Left colon (tissue), 2 donors: ENCODE measurements at regions of chr4 and their contacts with region 1.

Region 1: DNA sequence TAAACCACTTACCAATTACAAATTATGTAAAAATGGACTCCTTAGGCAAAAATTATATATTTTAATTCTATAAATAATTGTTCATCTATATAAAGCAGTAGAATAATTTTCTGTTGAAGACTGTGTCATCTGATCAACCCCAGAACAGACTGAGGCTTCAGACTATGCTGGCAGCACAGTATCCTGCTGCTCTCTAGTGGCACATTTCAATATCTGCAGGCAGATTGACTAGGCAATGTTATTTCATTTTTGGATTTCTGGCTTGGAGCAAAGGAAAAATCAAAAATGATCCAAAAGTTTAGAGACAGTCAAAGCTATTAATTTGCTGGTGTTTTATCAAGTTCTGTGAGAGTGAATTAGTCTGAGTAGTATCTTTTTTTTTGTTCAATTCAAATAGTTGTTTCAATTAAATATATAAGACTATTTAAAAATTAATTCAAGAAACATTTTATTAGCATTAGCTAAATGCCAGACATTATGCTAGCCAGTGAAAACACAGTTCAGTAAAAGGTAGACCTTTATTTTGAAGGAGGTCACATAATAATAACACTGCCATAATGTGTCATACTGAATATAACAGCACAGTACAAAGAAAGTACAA is 21.3 kb upstream of the SULT1E1 start:
- DNase-seq: peak in 1 of 2 donors; percentile 10
- ATAC-seq: peak; percentile 96

Region 2: GRCh38 chr4:69322055-69322454 is 559.2 kb before region 1 on chr4:
- intact Hi-C with region 1: loop called in 1 of 2 experiments (anchors 10 kb)
- DNase-seq: no peak
- ATAC-seq: no peak

Region 3: DNA sequence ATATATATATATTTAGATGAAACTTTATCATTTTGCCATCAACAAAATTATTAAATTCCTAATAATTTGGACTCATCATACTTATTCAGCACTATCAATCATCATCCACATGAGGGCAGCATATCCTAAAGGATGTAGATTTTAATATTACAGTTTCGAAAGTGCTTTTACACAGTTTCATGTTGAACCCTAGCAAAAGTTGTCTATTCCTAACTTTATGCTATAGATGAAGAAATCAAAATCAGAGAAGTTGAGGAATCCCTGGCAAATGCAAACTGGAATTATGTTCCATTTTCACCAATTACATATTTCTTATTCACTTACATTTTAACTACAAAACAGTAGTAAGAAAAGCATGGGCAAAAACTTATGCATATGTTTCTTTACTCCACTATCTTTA is 191.7 kb before region 1 on chr4:
- intact Hi-C with region 1: loop called in 1 of 2 experiments (anchors 5 kb)
- DNase-seq: no peak
- ATAC-seq: peak; percentile 64